ENCODE measurements at regions of chr2 and their contacts with region 1.

Region 1: DNA sequence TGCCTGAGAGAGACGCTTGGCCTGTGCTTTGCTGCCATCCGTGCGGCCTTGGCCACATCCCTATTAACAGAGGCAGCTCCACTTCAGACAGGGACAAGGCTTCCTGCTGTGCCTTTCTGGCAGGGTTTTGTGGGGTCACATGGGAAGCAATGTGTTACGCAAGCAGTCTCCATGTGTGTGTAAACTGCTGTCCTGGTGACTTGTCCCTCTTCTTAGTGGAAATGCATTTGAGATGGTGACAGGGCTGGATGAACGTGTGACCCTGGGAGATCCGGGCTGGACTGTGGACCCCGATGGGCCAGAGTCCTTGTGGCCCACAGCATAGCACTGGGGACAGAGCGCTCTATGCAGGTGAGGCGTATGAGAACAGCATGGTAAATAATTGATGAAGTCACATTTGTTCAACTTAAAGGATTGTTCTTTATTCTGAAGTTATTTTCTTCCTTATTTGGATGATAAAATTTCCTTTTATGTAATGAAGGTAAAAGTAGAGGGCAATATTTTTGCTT is 23.2 kb downstream of the ASB1 start:
- DNase-seq: peak; percentile 86

Region 2: DNA sequence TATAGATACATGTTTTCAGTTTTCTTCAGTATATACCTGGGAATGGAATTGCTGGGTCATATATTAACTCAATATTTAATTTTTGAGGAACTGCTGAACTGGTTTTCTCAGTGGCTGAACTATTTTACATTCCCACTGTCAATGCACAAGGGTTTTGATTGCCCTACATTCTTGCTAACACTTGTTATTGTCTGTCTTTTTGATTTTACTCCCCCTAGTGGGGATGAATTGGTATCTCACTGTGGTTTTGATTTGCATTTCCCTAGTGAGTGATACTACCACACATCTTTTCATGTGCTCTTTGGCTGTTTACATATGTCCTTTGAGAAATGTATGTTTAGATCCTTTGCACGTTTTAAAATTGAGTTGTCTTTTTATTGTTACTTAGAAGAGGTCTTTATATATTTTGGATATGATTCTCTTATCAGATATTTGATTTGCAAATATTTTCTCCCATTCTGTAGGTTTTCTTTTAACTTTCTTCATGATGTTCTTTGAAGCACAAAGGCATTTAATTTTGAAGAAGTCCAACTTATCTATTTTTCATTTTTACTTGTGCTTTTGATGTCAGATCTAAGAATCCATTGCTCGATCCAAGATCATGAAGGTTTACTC is 12.9 kb after region 1 on chr2:
- intact Hi-C with region 1: loop called in 1 of 2 experiments (anchors 2 kb)
- DNase-seq: no peak

Region 3: DNA sequence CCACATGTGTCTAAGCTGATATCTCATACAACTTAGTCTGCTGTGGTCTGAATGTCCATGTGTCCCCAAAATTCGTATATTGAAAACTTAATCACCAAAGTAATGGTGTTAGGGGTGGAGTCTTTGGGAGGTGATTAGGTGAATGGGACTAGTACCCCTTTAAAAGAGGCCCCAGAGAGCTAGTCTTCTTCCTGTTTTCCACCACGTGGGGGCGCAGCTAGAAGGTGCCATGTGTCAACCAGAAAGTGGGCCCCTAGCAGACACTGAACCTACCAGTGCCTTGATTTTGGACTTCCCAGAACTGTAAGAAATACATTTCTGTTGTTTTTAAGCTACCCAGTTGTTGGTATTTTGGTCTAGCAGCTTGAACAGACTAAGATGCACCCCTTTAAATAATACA is 63.4 kb after region 1 on chr2:
- intact Hi-C with region 1: loop called in 1 of 2 experiments (anchors 10 kb)
- DNase-seq: peak; percentile 78